Right lobe of liver (tissue), 6 donors: ENCODE measurements at regions of chr22 and their contacts with region 1.

Region 1: GRCh38 chr22:46287873-46288751 is 8.6 kb upstream of the GTSE1 start:
- DNase-seq: peak in 1 of 3 donors; percentile 46
- ATAC-seq: peak; percentile 50 to 63 (median 60)
- H3K4me3 ChIP-seq: no peak overlapping the region
- H3K27ac ChIP-seq: peak overlapping the region; percentile 26 to 38 (median 37)
- H3K4me1 ChIP-seq: no peaks in the 10 kb centered on the region
- H3K27me3 ChIP-seq: no peaks in the 10 kb centered on the region
- CTCF ChIP-seq: no peak
- POLR2A ChIP-seq: no peak

Region 2: DNA sequence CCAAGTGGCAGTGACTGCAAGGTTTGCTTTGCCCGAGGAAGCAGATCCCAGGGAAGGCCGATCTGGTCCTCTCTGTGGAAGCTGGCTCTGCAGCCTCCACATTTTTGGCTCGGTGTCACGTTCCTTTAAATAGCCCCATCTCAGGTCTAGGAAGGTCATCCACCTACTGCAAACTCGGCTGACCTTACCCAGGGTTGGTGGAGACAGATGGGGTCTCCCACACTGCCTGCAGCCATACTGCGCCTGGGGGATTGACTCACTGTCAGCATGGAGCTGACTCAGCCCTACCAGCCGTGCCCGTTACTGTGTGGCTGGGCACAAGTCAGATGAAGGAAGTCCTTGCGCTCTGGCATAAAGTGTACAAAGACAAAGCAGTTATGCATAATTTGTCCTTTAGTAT is 54.9 kb before region 1 on chr22:
- intact Hi-C with region 1: loop called in 1 of 2 experiments (anchors 10 kb)
- DNase-seq: no peak
- ATAC-seq: peak; percentile 10 to 38 (median 25)
- H3K4me3 ChIP-seq: no peak overlapping the region
- H3K27ac ChIP-seq: no peak overlapping the region
- H3K4me1 ChIP-seq: peaks cover 0 to 29% (median 5%) of the 10 kb centered on the region in 4 donors
- H3K27me3 ChIP-seq: no peaks in the 10 kb centered on the region
- CTCF ChIP-seq: no peak
- POLR2A ChIP-seq: no peak